Activated CD4-positive, alpha-beta T cell treated with anti-CD3 and anti-CD28 coated beads for 36 hours (primary cell): ENCODE measurements at regions of chr5 and their contacts with region 1.

Region 1: DNA sequence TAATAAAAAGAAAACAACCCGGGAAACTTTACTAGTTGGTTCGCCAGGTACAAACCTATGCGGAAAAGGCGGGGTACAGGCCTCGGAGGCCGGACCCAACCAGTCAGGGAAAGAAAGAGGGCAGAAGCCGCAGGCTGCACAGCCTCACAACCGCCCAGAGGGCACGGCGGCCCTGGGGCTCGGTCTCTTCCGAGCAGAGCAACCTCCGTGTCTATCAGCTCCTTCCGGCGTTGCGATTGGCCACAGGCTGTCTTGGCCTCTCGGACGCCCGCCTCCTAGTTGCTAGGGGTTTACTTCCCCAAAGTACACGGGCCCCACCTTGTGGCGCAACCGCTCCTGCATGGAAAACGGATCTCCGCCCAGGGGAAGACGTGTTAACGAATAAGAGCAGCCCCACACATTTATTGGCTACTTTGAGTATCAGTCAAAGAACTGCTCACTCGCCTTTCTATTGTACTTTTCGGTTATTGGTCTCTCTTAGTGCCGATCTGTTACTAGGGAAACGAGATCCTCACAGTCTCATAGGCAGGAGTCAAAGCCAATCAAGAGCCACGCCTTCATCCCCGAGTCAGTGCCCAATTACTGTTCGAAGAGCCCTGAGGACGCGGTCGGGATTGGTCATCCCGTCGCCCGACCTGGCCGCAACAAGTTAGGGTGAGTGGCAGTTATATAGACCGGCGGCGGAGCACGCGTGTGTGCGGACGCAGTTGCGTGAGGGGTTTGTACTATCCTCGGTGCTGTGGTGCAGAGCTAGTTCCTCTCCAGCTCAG is at the start of gene G3BP1:
- DNase-seq: peak; percentile 100
- ATAC-seq: peak; percentile 84
- H3K4me3 Mint-ChIP-seq: no peak within 1 kb of the TSS
- H3K27ac Mint-ChIP-seq: peak within 1 kb of the TSS; percentile 73
- H3K4me1 Mint-ChIP-seq: peaks cover 32% of the 10 kb centered on the region
- H3K27me3 Mint-ChIP-seq: no peaks in the 10 kb centered on the region
- total RNA-seq, gene G3BP1: 253 to 280 TPM

Region 2: GRCh38 chr5:150000256-150000989 is 1771.0 kb before region 1 on chr5 and contains the starts of genes HMGXB3 and TIGD6:
- CTCF ChIA-PET with region 1: no interaction called
- POLR2A ChIA-PET with region 1: no interaction called
- intact Hi-C with region 1: loop called in 1 of 2 experiments (anchors 10 kb)
- DNase-seq: peak; percentile 93
- ATAC-seq: peak; percentile 80
- H3K4me3 Mint-ChIP-seq: peak within 1 kb of the TSS; percentile 86
- H3K27ac Mint-ChIP-seq: peak within 1 kb of the TSS; percentile 94
- H3K4me1 Mint-ChIP-seq: peaks cover 37% of the 10 kb centered on the region
- H3K27me3 Mint-ChIP-seq: no peaks in the 10 kb centered on the region
- total RNA-seq, gene HMGXB3: 27.2 to 30.5 TPM
- total RNA-seq, gene TIGD6: 2.5 to 2.6 TPM

Region 3: GRCh38 chr5:151080623-151081430 is 690.6 kb before region 1 on chr5 and contains the start of gene TNIP1:
- CTCF ChIA-PET with region 1: interaction called, 3 read pairs
- POLR2A ChIA-PET with region 1: no interaction called
- intact Hi-C with region 1: loop called in 1 of 2 experiments (anchors 5 kb)
- DNase-seq: peak; percentile 96
- ATAC-seq: peak; percentile 67
- H3K4me3 Mint-ChIP-seq: peak within 1 kb of the TSS; percentile 80
- H3K27ac Mint-ChIP-seq: peak within 1 kb of the TSS; percentile 91
- H3K4me1 Mint-ChIP-seq: peaks cover 74% of the 10 kb centered on the region
- H3K27me3 Mint-ChIP-seq: no peaks in the 10 kb centered on the region
- total RNA-seq, gene TNIP1: 351 to 408 TPM

Region 4: DNA sequence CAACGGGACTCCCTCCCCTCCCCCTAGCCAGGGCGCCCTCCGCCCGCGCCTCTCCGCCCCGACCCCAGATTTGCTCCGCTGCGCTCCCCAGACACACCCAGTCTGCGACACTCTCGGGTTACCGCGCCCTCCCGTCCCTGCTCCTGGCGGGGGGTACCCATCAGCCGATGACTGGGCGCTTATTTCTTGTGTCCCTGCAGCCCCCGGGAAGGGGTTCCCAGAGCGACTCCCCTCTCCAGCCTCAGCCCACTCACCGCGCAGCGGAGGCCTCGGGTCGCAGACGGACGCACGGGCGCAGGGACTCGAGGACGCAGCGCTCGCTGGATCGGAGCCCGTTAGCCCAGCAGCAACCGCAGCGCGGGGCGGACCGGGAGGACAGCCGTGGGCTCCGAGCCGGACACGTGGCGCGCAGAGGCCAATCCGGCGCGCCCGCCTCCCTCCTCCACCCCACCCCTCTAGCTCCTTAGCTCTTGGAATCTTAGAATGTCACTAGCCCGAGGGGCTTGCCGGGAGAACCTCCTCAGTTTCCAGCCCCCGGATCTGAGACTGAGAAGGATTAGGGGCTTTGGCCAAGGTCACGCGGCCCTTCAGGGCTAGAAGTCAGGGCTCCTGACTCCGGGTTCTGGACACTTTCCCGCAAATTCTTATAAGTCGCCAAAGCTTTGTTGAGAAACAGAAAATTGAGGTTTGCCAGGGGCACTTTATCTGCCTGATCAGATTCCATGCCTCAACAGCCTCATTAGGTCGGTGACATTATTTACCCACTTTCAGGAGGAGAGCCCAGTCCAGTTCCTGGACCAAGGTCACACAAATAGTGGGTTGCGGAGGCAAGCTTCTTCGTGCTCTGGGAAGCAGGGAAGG is 613.8 kb before region 1 on chr5 and contains the start of gene ANXA6:
- CTCF ChIA-PET with region 1: interaction called, 4 read pairs
- POLR2A ChIA-PET with region 1: no interaction called
- intact Hi-C with region 1: loop called in 1 of 2 experiments (anchors 10 kb)
- DNase-seq: peak; percentile 80
- ATAC-seq: peak; percentile 47
- H3K4me3 Mint-ChIP-seq: peak within 1 kb of the TSS; percentile 91
- H3K27ac Mint-ChIP-seq: peak within 1 kb of the TSS; percentile 93
- H3K4me1 Mint-ChIP-seq: peaks cover 59% of the 10 kb centered on the region
- H3K27me3 Mint-ChIP-seq: no peaks in the 10 kb centered on the region
- total RNA-seq, gene ANXA6: 322 to 332 TPM

Region 5: GRCh38 chr5:151447174-151448037 is 324.0 kb before region 1 on chr5 and contains the start of gene SLC36A1:
- CTCF ChIA-PET with region 1: interaction called, 4 read pairs
- POLR2A ChIA-PET with region 1: interaction called, 6 read pairs
- intact Hi-C with region 1: loop called in 1 of 2 experiments (anchors 1 kb)
- DNase-seq: peak; percentile 98
- ATAC-seq: peak; percentile 94
- H3K4me3 Mint-ChIP-seq: peak within 1 kb of the TSS; percentile 93
- H3K27ac Mint-ChIP-seq: peak within 1 kb of the TSS; percentile 88
- H3K4me1 Mint-ChIP-seq: peaks cover 22% of the 10 kb centered on the region
- H3K27me3 Mint-ChIP-seq: peaks cover 12% of the 10 kb centered on the region
- total RNA-seq, gene SLC36A1: 3.4 to 4.4 TPM

Region 6: GRCh38 chr5:151740336-151740942 is 31.0 kb before region 1 on chr5:
- CTCF ChIA-PET with region 1: interaction called, 11 read pairs
- POLR2A ChIA-PET with region 1: interaction called, 5 read pairs
- intact Hi-C with region 1: loop called in 1 of 2 experiments (anchors 1 kb)
- DNase-seq: peak; percentile 65
- ATAC-seq: peak; percentile 72
- H3K4me3 Mint-ChIP-seq: no peak overlapping the region
- H3K27ac Mint-ChIP-seq: no peak overlapping the region
- H3K4me1 Mint-ChIP-seq: peaks cover 14% of the 10 kb centered on the region
- H3K27me3 Mint-ChIP-seq: no peaks in the 10 kb centered on the region

Region 7: GRCh38 chr5:151795426-151795825 is 24.0 kb after region 1 on chr5:
- CTCF ChIA-PET with region 1: no interaction called
- POLR2A ChIA-PET with region 1: no interaction called
- intact Hi-C with region 1: loop called in 1 of 2 experiments (anchors 2 kb)
- DNase-seq: no peak
- ATAC-seq: no peak
- H3K4me3 Mint-ChIP-seq: no peak overlapping the region
- H3K27ac Mint-ChIP-seq: no peak overlapping the region
- H3K4me1 Mint-ChIP-seq: peaks cover 27% of the 10 kb centered on the region
- H3K27me3 Mint-ChIP-seq: no peaks in the 10 kb centered on the region